ENCODE measurements at regions of chr6 and their contacts with region 1.

Region 1: GRCh38 chr6:113920663-113921267 is 50.2 kb downstream of the HDAC2 start:
- DNase-seq: no peak
- ATAC-seq: peak; percentile 34

Region 2: GRCh38 chr6:113723182-113723581 is 197.6 kb before region 1 on chr6:
- intact Hi-C with region 1: loop called (anchors 10 kb)
- DNase-seq: no peak
- ATAC-seq: no peak